ENCODE measurements at regions of chr20 and their contacts with region 1.

Region 1: DNA sequence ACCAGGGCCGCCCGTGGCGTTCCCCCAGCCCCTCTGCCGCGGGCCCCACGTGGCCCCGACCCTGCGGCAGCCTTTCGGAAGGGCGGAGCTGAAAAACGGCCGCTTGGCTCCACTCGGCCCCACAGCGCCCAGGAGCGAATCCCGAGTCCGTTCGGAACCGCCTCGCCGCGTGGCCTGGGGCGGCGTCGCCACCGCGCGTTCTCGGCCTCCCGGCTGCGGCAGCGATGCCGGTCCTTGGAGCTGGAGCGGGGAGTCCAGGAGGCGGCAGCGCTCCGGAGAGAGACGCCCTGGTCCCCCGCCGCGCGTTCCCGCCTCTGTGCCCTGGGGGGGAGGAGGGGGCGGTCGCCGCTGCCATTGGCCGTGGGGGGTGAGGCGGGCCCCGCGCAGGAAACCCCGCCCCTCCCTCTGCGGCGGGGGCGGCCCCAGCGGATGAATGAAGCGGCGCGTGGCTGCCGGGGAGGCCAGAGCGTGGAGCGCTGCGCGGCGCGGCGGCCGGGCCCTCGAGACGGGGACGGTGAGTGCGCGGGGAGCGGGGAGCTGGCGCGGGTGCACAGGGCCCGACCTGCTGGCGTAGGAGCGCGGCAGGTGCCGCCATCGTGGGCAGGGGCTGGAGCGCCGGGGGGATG is at the start of gene SLCO4A1:
- DNase-seq: peak; percentile 69 to 92 (median 82)
- ATAC-seq: peak; percentile 94
- H3K4me3 ChIP-seq: peak within 1 kb of the TSS; percentile 43
- H3K4me3 Mint-ChIP-seq: peak within 1 kb of the TSS; percentile 88
- H3K27ac ChIP-seq: no peak within 1 kb of the TSS
- H3K27ac Mint-ChIP-seq: no peak within 1 kb of the TSS
- H3K4me1 ChIP-seq: peaks cover 37% of the 10 kb centered on the region
- H3K4me1 Mint-ChIP-seq: no peaks in the 10 kb centered on the region
- H3K27me3 ChIP-seq: no peaks in the 10 kb centered on the region
- H3K27me3 Mint-ChIP-seq: no peaks in the 10 kb centered on the region
- CTCF ChIP-seq: no peak
- total RNA-seq, gene SLCO4A1: 2.3 to 2.5 TPM

Region 2: DNA sequence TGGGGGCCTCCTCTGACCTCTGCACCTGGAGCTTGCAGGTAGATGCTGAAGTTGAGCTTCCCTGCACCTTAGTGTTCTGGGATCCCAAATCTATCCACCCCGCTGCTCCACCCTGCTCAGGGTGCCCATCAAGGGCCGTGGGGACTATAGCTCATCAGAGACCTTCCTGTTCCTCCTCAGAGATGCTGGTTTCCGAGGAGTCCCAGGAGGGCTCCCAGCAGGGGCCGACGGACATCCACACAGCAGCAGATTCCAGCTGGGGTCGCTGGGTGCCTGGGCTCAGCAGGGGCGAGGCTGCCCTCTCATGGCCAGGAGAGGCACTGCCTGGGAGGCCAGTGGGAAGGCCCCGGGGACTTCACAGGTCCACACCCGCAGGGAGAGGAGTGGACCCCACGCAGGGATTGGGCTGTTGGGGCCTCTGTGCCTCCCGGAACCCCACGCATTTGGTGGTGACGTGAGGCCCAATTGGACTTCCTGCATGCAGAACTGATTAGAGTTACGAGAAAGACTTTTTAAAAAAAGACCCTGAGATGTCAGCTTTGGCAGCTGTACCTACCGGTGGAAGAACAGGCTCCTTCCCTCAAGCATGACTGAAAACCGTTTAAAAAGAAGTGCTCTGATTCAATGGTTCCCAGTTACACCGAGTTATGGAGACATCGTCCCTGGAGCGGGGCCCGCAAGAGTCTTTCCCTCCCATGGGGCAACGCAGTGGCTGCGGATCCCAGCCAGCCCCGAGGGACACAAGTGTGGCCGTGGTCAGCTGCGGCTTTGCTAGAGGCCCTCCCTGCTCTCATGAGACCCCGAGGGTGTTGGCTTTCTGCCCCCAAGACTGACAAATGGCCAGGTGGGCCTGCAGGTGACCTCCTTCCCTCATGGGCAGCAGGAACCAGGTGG is 25.2 kb before region 1 on chr20:
- CTCF ChIA-PET with region 1: interaction called, 10 read pairs
- POLR2A ChIA-PET with region 1: no interaction called
- intact Hi-C with region 1: no loop called
- DNase-seq: peak; percentile 44 to 82 (median 58)
- ATAC-seq: peak; percentile 88
- H3K4me3 ChIP-seq: no peak overlapping the region
- H3K4me3 Mint-ChIP-seq: peak overlapping the region; percentile 42
- H3K27ac ChIP-seq: no peak overlapping the region
- H3K27ac Mint-ChIP-seq: peak overlapping the region; percentile 44
- H3K4me1 ChIP-seq: peaks cover 27% of the 10 kb centered on the region
- H3K4me1 Mint-ChIP-seq: peaks cover 15% of the 10 kb centered on the region
- H3K27me3 ChIP-seq: no peaks in the 10 kb centered on the region
- H3K27me3 Mint-ChIP-seq: no peaks in the 10 kb centered on the region
- CTCF ChIP-seq: peak; percentile 82

Region 3: DNA sequence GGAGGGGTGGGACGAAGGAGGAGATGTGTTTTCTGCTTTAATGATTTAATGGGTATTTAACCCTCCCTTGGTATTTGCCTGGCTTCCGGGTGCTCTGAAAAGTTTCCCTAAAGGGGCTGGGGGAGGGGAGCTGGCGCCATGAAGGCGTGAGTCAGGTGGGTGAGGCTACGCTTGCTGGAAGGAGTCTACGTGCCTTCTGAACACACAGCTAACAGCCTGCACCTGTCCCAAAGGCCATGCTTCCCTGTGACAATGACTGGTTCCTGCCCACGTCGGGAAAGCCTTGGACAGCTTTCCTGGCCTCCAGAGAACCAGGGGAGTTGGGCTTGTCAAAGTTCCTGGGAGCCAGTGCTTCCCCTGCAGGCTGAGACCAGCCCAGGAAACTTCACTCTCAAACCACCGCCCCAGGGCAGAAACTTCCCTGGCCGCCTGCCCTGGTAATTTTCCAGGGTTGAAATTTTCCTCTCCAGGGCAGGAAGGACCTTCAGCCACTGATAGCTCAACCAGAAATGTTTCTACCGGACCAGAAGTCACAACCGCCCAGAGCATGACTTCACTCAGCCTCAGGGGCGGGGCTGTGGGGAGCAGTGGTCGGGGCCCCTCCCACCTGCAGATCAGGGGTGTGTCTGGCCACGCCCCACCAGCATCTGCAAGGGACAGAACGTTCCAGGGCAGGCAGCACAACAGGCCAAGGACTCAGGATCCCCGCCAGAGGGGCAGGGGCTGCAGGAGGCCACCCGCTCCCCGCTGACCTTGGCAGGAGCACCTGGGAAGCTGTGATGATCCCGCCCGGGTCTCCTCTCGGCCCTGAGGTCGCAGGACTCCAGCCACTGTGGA is 18.4 kb before region 1 on chr20:
- CTCF ChIA-PET with region 1: no interaction called
- POLR2A ChIA-PET with region 1: no interaction called
- intact Hi-C with region 1: loop called in 1 of 2 experiments (anchors 1 kb)
- DNase-seq: peak; percentile 66 to 89 (median 79)
- ATAC-seq: peak; percentile 93
- H3K4me3 ChIP-seq: peak overlapping the region; percentile 29
- H3K4me3 Mint-ChIP-seq: peak overlapping the region; percentile 75
- H3K27ac ChIP-seq: no peak overlapping the region
- H3K27ac Mint-ChIP-seq: peak overlapping the region; percentile 82
- H3K4me1 ChIP-seq: peaks cover 23% of the 10 kb centered on the region
- H3K4me1 Mint-ChIP-seq: peaks cover 12% of the 10 kb centered on the region
- H3K27me3 ChIP-seq: no peaks in the 10 kb centered on the region
- H3K27me3 Mint-ChIP-seq: no peaks in the 10 kb centered on the region
- CTCF ChIP-seq: no peak

Region 4: DNA sequence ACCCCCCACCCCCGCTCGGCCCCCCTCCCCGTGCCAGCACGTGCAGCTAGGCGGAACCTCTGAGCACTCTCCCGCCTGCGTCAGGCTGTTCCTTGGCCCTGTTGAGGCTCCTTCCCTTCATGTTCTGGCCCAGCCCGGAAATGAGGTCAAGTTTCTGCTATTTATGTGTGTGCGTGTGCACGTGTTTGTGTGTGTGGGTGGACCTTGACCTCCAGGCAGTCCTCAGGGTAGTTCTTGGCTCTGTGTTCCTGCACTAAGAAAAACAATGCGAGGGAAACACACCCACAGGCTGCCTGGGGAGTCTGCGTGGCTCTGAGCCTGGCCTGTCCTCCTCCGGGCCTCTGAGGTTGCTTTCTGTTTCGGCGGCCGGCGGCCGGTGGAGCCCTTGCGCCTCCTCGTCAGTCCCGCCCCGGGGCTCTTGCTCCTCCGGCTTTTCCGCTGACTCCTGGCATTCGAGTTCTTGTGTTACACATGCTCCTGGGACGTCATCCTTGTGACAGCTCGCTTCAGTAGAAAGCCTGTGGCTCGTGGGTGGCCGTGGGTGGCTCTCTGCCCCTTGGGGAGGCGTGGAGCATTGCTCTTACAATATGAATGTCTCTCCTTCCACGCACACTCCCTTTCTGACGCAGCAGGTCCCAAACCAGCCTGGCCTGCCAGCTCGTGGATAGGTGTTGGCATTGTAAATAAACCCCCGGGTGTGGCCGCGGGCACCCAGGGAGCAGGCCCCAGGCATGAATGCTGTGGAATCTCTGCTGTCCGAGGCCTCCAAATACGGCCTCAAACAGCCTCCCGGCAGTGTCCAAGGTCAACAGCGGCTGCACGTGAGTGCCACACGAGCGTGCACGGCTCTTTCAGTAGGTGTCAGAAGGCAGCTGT is 10.1 kb after region 1 on chr20:
- CTCF ChIA-PET with region 1: interaction called, 9 read pairs
- POLR2A ChIA-PET with region 1: interaction called, 34 read pairs
- intact Hi-C with region 1: loop called in 1 of 2 experiments (anchors 1 kb)
- DNase-seq: peak; percentile 48 to 90 (median 64)
- ATAC-seq: peak; percentile 64
- H3K4me3 ChIP-seq: peak overlapping the region; percentile 56
- H3K4me3 Mint-ChIP-seq: peak overlapping the region; percentile 93
- H3K27ac ChIP-seq: peak overlapping the region; percentile 70 to 89
- H3K27ac Mint-ChIP-seq: peak overlapping the region; percentile 91
- H3K4me1 ChIP-seq: peaks cover 38% of the 10 kb centered on the region
- H3K4me1 Mint-ChIP-seq: peaks cover 30% of the 10 kb centered on the region
- H3K27me3 ChIP-seq: no peaks in the 10 kb centered on the region
- H3K27me3 Mint-ChIP-seq: no peaks in the 10 kb centered on the region
- CTCF ChIP-seq: no peak

Region 5: GRCh38 chr20:62668441-62669027 is 26.4 kb after region 1 on chr20:
- CTCF ChIA-PET with region 1: no interaction called
- POLR2A ChIA-PET with region 1: no interaction called
- intact Hi-C with region 1: no loop called
- DNase-seq: peak in 11 of 14 experiments; percentile 24 to 72 (median 42)
- ATAC-seq: peak; percentile 52
- H3K4me3 ChIP-seq: no peak overlapping the region
- H3K4me3 Mint-ChIP-seq: no peak overlapping the region
- H3K27ac ChIP-seq: no peak overlapping the region
- H3K27ac Mint-ChIP-seq: no peak overlapping the region
- H3K4me1 ChIP-seq: no peaks in the 10 kb centered on the region
- H3K4me1 Mint-ChIP-seq: no peaks in the 10 kb centered on the region
- H3K27me3 ChIP-seq: no peaks in the 10 kb centered on the region
- H3K27me3 Mint-ChIP-seq: no peaks in the 10 kb centered on the region
- CTCF ChIP-seq: peak; percentile 83

Region 6: GRCh38 chr20:62808211-62808865 is 166.2 kb after region 1 on chr20:
- CTCF ChIA-PET with region 1: no interaction called
- POLR2A ChIA-PET with region 1: no interaction called
- intact Hi-C with region 1: loop called in 1 of 2 experiments (anchors 1 kb)
- DNase-seq: peak; percentile 64 to 85 (median 72)
- ATAC-seq: peak; percentile 58
- H3K4me3 ChIP-seq: no peak overlapping the region
- H3K4me3 Mint-ChIP-seq: peak overlapping the region; percentile 89
- H3K27ac ChIP-seq: no peak overlapping the region
- H3K27ac Mint-ChIP-seq: peak overlapping the region; percentile 84
- H3K4me1 ChIP-seq: peaks cover 41% of the 10 kb centered on the region
- H3K4me1 Mint-ChIP-seq: peaks cover 28% of the 10 kb centered on the region
- H3K27me3 ChIP-seq: no peaks in the 10 kb centered on the region
- H3K27me3 Mint-ChIP-seq: peaks cover 4% of the 10 kb centered on the region
- CTCF ChIP-seq: peak; percentile 91

Region 7: DNA sequence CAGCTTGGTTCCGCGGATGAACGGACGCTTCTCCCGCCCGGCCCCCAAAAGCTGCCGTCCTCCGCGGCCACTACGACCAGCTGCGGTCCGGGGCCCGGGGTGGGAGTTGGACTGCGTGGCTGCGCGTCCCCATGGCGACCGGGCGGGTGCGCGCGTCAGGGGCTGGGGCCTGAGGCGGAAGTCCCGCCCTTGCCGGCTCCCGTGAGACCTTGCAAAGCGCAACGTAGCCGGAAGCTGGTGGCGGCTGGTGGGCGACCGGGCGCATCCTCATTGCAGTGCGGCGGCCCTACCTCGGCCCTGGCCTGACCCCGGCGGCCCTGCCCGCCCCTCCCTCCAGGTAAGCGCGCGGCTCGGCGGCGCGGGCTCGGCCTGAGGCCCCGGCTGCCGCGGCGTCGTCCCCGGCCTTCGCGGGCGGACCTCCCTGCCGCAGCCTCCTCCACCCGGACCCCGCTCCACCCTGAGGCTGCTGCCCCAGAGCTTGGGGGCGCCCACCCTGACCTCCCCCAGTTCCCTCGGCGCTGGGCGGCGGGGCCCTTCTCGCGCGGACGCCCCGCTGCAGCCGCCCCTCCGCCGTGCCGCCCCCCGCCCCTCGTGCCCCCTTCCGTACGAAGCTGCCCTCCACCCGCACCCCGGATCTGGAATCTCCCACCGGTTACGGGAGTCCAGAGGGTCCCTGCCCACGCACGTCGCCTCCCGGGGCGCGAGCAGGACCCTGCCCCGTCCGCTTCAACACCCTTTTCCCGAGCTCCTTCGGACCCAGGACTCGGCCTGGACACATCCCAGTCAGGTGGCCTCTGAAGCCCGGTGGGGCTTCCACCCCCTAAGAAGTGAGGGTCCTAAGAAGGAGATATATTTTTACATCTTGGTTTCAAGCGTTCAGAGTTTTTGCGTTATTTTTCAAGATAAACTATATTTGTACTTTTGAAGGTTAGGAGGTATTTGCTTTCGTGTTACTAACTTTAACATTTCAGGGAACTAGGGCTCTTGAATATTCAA is 630.7 kb after region 1 on chr20 and contains the start of gene ARFGAP1:
- CTCF ChIA-PET with region 1: no interaction called
- POLR2A ChIA-PET with region 1: no interaction called
- intact Hi-C with region 1: loop called in 1 of 2 experiments (anchors 5 kb)
- DNase-seq: peak; percentile 73 to 94 (median 84)
- ATAC-seq: peak; percentile 93
- H3K4me3 ChIP-seq: peak within 1 kb of the TSS; percentile 80
- H3K4me3 Mint-ChIP-seq: peak within 1 kb of the TSS; percentile 90
- H3K27ac ChIP-seq: no peak within 1 kb of the TSS
- H3K27ac Mint-ChIP-seq: peak within 1 kb of the TSS; percentile 82
- H3K4me1 ChIP-seq: peaks cover 26% of the 10 kb centered on the region
- H3K4me1 Mint-ChIP-seq: peaks cover 31% of the 10 kb centered on the region
- H3K27me3 ChIP-seq: no peaks in the 10 kb centered on the region
- H3K27me3 Mint-ChIP-seq: no peaks in the 10 kb centered on the region
- CTCF ChIP-seq: no peak
- total RNA-seq, gene ARFGAP1: 120 TPM